ENCODE measurements at regions of chr2 and their contacts with region 1.

Region 1: DNA sequence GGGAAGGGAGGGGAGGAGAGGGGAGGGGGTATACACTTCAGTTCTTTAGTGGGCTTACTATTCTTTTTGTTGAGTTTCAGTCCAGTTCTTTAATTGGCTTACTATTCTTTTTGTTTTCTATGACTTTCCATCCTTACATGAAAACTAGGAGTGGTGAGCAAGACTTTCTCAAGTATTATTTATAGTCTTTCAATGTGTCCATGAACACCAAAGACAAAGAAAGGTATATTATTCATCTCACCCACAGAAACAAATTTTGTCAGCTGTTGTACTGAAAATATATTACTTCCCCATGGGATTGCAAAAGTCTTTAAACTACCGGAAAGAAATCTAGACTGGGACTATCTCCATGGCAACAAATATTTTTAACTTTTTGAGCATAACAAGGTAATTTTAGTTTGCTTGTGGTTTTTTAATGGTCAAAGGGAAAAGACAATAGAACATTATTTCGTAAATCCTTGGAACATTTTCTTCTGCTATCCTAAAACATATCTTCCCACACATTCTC is 17.6 kb downstream of the ADAM17 start:
- DNase-seq: peak; percentile 85
- H3K4me3 Mint-ChIP-seq: no peak overlapping the region
- H3K27ac Mint-ChIP-seq: peak overlapping the region; percentile 79
- H3K4me1 Mint-ChIP-seq: peaks cover 14% of the 10 kb centered on the region
- H3K27me3 Mint-ChIP-seq: no peaks in the 10 kb centered on the region
- CTCF ChIP-seq: no peak

Region 2: DNA sequence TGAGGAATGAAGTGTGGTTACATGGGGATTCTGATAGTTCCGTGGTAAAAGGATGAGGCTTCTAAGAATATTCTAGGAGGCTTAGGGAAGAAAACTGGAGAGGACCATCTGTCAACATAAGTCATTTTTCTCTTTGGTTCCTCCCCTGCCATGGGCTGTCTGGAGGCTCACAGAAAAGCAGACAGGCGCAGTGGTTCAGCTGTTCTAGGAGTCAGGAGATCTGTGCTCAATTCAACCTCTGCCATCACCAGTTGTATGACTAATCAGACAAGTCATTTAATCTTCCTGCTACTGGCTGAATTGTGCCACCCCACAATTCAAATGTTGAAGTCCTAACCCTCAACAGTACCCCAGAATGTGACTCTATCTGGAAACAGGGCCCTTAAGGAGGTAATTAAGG is 18.8 kb before region 1 on chr2:
- CTCF ChIA-PET with region 1: interaction called, 4 read pairs
- POLR2A ChIA-PET with region 1: interaction called, 11 read pairs
- intact Hi-C with region 1: no loop called
- DNase-seq: no peak
- H3K4me3 Mint-ChIP-seq: no peak overlapping the region
- H3K27ac Mint-ChIP-seq: no peak overlapping the region
- H3K4me1 Mint-ChIP-seq: no peaks in the 10 kb centered on the region
- H3K27me3 Mint-ChIP-seq: no peaks in the 10 kb centered on the region
- CTCF ChIP-seq: no peak